ENCODE measurements at regions of chr11 and their contacts with region 1.

Region 1: GRCh38 chr11:12832825-12833224 is 158.6 kb downstream of the TEAD1 start:
- DNase-seq: no peak
- H3K4me3 ChIP-seq: no peak overlapping the region
- H3K27ac ChIP-seq: no peak overlapping the region
- H3K4me1 ChIP-seq: peaks cover 2% of the 10 kb centered on the region
- H3K27me3 ChIP-seq: no peaks in the 10 kb centered on the region
- CTCF ChIP-seq: peak in 1 of 4 experiments; percentile 17
- POLR2A ChIP-seq: no peak

Region 2: GRCh38 chr11:12871788-12872321 is 39.0 kb after region 1 on chr11:
- intact Hi-C with region 1: loop called (anchors 5 kb)
- DNase-seq: no peak
- H3K4me3 ChIP-seq: no peak overlapping the region
- H3K27ac ChIP-seq: no peak overlapping the region
- H3K4me1 ChIP-seq: no peaks in the 10 kb centered on the region
- H3K27me3 ChIP-seq: no peaks in the 10 kb centered on the region
- CTCF ChIP-seq: no peak
- POLR2A ChIP-seq: no peak

Region 3: GRCh38 chr11:12909879-12910278 is 77.1 kb after region 1 on chr11:
- intact Hi-C with region 1: no loop called
- DNase-seq: no peak
- H3K4me3 ChIP-seq: no peak overlapping the region
- H3K27ac ChIP-seq: no peak overlapping the region
- H3K4me1 ChIP-seq: no peaks in the 10 kb centered on the region
- H3K27me3 ChIP-seq: no peaks in the 10 kb centered on the region
- CTCF ChIP-seq: no peak
- POLR2A ChIP-seq: no peak